Astrocyte of the cerebellum (primary cell): ENCODE measurements at regions of chr6 and their contacts with region 1.

Region 1: GRCh38 chr6:17653198-17653882 is 53.2 kb downstream of the FAM8A1 start:
- DNase-seq: no peak
- H3K4me3 ChIP-seq: no peak overlapping the region
- CTCF ChIP-seq: no peak

Region 2: GRCh38 chr6:17165383-17165782 is 488.0 kb before region 1 on chr6:
- in situ Hi-C with region 1: no loop called
- DNase-seq: no peak
- H3K4me3 ChIP-seq: no peak overlapping the region
- CTCF ChIP-seq: no peak

Region 3: DNA sequence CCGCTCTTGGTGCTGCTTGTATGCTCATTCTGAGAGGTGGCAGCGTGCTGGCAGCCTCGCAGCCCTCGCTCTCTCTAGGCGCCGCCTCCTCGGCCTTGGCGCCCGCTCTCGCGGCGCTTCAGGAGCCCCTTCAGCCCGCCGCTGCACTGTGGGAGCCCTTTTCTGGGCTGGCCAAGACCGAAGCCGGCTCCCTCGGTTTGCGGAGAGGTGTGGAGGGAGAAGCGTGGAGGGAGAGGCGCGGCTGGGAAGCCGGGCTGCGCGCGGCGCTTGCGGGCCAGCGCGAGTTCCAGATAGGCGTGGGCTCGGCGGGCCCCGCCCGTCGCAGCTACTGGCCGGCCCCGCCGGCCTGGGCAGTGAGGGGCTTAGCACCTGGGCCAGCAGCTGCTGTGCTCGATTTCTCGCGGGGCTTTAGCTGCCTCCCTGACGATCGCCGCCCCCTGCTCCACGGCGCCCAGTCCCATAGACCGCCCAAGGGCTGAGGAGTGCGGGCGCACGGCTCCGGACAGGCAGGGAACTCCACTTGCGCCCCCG is 72.8 kb before region 1 on chr6:
- in situ Hi-C with region 1: no loop called
- DNase-seq: peak; percentile 11
- H3K4me3 ChIP-seq: peak overlapping the region; percentile 57
- CTCF ChIP-seq: no peak

Region 4: GRCh38 chr6:17700421-17701416 is 47.4 kb after region 1 on chr6:
- in situ Hi-C with region 1: loop called (anchors 5 kb)
- DNase-seq: no peak
- H3K4me3 ChIP-seq: no peak overlapping the region
- CTCF ChIP-seq: no peak